ENCODE measurements at regions of chr3 and their contacts with region 1.

Region 1: GRCh38 chr3:42247576-42248027 is 18.4 kb downstream of the CCK start:
- DNase-seq: peak; percentile 50
- H3K4me3 ChIP-seq: no peak overlapping the region
- H3K27ac ChIP-seq: no peak overlapping the region
- H3K4me1 ChIP-seq: no peaks in the 10 kb centered on the region
- H3K27me3 ChIP-seq: no peaks in the 10 kb centered on the region
- CTCF ChIP-seq: peak; percentile 74

Region 2: GRCh38 chr3:42314411-42314810 is 66.8 kb after region 1 on chr3:
- intact Hi-C with region 1: no loop called
- DNase-seq: no peak
- H3K4me3 ChIP-seq: no peak overlapping the region
- H3K27ac ChIP-seq: no peak overlapping the region
- H3K4me1 ChIP-seq: no peaks in the 10 kb centered on the region
- H3K27me3 ChIP-seq: no peaks in the 10 kb centered on the region
- CTCF ChIP-seq: no peak

Region 3: DNA sequence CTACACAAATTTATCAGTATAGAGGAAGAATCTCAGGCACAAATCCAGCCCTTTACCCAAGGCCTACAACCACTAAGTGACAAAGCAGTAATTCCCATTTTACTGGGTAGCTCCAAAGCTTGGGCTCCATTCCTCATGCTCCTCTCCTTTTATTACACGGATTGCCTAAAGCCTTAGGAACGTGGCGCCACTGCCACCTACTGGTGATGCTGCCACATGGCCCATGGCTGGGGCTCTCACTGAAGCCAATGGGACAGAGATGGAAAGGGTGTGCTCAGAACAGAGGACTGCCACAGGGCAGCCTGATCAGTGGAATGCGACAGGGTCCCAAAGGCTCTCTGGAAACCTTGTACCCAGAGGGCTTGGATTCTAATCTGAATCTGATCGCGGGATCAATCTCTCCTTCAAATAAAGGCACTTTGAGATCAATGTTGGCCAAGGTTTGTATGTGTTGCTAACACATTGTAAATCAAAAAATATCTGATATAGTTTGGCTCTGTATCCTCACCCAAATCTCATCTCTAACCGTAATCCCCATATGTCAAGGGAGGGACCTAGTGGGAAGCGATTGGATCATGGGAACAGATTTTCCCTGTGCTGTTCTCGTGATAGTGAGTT is 196.3 kb after region 1 on chr3:
- intact Hi-C with region 1: loop called (anchors 1 kb)
- DNase-seq: peak; percentile 87
- H3K4me3 ChIP-seq: no peak overlapping the region
- H3K27ac ChIP-seq: no peak overlapping the region
- H3K4me1 ChIP-seq: no peaks in the 10 kb centered on the region
- H3K27me3 ChIP-seq: no peaks in the 10 kb centered on the region
- CTCF ChIP-seq: peak; percentile 95

Region 4: DNA sequence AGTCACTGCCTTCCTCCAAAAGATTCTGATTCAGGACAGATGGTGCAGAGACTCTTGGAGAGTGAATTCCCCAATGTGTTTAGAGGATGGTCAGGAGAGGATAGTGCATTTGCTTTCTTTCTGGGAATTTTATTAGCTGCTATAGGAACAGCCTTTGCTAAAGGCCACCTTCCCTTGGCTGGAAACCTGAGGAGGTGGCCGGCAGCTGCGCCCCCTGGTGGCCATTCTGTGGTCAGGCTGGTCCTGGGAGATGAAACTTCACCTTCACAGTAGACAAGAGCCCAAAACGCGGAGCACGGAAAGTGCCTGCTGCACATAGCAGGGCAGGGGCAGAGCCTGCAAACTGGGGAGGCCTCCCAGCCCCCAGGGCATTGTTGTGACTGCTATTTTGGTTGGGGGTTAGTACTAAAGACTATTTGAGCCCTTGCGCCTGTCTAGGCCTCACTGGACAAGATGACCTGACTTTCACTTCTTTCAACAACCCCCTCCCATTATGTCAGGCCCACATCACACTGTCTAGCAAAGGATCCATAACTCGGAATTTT is 299.9 kb after region 1 on chr3:
- intact Hi-C with region 1: loop called (anchors 5 kb)
- DNase-seq: peak; percentile 72
- H3K4me3 ChIP-seq: no peak overlapping the region
- H3K27ac ChIP-seq: no peak overlapping the region
- H3K4me1 ChIP-seq: peaks cover 10% of the 10 kb centered on the region
- H3K27me3 ChIP-seq: no peaks in the 10 kb centered on the region
- CTCF ChIP-seq: peak; percentile 98